Heart right ventricle (tissue), 16 donors: ENCODE measurements at regions of chr7 and their contacts with region 1.

Region 1: DNA sequence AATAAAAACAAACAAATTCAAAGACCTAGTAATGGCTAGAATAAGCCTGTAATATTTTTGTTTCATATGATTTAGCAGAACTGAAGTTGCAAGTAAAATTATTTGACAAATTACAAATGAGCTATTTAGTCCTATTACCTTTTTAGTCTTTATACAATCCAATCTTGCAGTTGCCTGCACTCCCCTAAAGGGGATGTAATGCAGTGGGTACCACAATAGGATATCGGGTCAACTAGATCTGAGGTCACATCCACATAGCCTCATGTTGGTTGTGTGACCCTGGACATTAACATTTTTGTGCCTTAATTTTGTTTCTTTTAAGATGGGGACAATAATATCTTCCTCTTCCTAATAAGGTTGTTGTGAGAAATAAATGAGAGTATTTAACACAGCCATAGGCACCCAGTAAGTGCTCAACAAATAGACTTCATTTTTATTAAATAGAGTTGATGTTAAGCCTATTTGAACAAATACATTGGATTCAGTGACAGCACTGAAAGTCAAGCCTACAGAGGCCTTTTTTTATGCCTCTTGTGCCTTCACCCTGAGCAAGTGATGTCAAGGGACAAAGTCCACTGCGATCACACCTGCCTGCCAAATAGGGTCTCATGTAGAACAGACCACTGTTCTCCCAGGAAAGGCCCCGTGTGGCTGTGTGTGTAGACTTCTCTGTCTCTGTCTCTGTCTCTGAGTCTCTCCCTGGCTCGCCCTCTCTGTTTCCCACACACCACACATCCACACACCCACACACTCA is 124.8 kb downstream of the EVX1 start:
- DNase-seq: no peak
- ATAC-seq: no peak
- H3K4me3 ChIP-seq: no peak overlapping the region
- H3K27ac ChIP-seq: no peak overlapping the region
- H3K4me1 ChIP-seq: peaks cover 0 to 25% (median 0%) of the 10 kb centered on the region in 9 donors
- H3K27me3 ChIP-seq: peaks cover 0 to 27% (median 0%) of the 10 kb centered on the region in 7 donors
- CTCF ChIP-seq: no peak

Region 2: GRCh38 chr7:27349655-27350054 is 17.7 kb before region 1 on chr7:
- intact Hi-C with region 1: loop called in 1 of 10 experiments (anchors 1 kb)
- DNase-seq: no peak
- ATAC-seq: no peak
- H3K4me3 ChIP-seq: no peak overlapping the region
- H3K27ac ChIP-seq: no peak overlapping the region
- H3K4me1 ChIP-seq: no peaks in the 10 kb centered on the region
- H3K27me3 ChIP-seq: peaks cover 0 to 38% (median 14%) of the 10 kb centered on the region in 7 donors
- CTCF ChIP-seq: no peak